ENCODE measurements at regions of chr20 and their contacts with region 1.

Region 1: GRCh38 chr20:50815162-50815989 is 20.5 kb downstream of the BCAS4 start:
- DNase-seq: no peak
- H3K4me3 ChIP-seq: no peak overlapping the region
- H3K27ac ChIP-seq: no peak overlapping the region
- H3K4me1 ChIP-seq: peaks cover 8% of the 10 kb centered on the region
- H3K27me3 ChIP-seq: no peaks in the 10 kb centered on the region
- CTCF ChIP-seq: no peak

Region 2: GRCh38 chr20:50138479-50139393 is 676.6 kb before region 1 on chr20:
- CTCF ChIA-PET with region 1: no interaction called
- POLR2A ChIA-PET with region 1: no interaction called
- intact Hi-C with region 1: no loop called
- DNase-seq: no peak
- H3K4me3 ChIP-seq: no peak overlapping the region
- H3K27ac ChIP-seq: no peak overlapping the region
- H3K4me1 ChIP-seq: no peaks in the 10 kb centered on the region
- H3K27me3 ChIP-seq: no peaks in the 10 kb centered on the region
- CTCF ChIP-seq: no peak

Region 3: DNA sequence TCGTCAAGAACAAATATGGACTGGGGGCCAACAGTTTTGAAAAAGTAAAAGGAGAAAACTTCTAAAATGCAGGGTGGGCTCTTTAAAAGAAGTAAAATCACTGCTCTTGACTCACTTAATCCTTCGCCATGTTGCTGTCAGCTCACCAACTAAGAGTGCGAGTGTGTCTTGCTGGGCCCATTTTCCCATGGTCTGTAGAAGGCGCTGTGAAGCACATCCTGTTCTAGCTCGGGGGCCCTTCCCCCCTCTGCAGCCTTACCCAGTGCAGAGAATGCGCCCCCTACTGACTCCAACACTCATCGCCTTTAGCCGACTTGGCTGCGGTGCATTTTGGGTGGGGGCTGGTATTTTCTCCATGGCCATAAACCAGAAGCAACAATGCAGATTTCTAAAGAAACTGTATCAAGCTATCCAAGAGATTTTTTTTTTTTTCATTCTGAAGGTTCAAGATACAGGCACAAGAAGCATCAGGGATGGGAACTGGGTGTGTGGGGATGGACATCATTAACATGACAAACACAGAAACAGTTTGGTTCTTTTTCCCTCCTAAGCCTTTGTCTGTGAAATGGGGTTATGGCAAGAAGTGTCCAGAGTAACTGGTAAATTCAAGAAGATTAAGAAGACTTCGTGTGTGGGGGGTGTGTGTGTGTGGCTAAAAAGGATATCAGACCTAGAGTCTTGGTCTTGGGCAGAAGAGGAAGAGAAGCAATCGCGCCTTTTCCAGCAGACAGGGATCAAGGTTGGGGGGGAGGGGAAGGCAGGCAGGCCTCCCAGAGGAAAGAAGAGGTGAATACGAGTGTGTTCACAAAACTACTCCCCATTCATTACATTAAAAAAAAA is 114.1 kb after region 1 on chr20:
- CTCF ChIA-PET with region 1: interaction called, 11 read pairs
- POLR2A ChIA-PET with region 1: interaction called, 3 read pairs
- intact Hi-C with region 1: loop called (anchors 5 kb)
- DNase-seq: peak; percentile 99
- H3K4me3 ChIP-seq: peak overlapping the region; percentile 64
- H3K27ac ChIP-seq: peak overlapping the region; percentile 82
- H3K4me1 ChIP-seq: peaks cover 43% of the 10 kb centered on the region
- H3K27me3 ChIP-seq: no peaks in the 10 kb centered on the region
- CTCF ChIP-seq: peak; percentile 100